Left ventricle myocardium inferior (tissue), 1 donor: ENCODE measurements at regions of chr3 and their contacts with region 1.

Region 1: DNA sequence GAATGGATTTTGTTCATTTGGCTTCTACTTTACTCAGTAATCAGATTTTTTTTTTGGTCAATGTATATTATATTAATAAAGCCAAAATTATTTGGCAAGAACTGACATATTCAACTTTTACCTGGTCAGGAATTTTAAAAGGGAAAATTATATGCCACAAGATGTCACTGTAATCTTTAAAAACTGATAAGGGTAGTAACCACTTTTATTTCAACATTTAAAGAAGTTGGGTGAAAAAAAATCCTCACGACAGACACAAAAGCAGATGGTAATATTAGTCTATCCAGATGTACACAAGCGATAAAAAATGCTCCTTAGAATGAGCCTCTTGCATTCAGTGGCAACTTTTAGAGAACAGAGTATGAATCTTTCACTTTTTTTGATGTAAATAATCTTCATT is 101.9 kb downstream of the SERPINI1 start:
- DNase-seq: no peak
- H3K4me3 ChIP-seq: peak overlapping the region; percentile 27
- H3K27ac ChIP-seq: peak overlapping the region; percentile 14
- H3K4me1 ChIP-seq: peaks cover 12% of the 10 kb centered on the region
- H3K27me3 ChIP-seq: no peaks in the 10 kb centered on the region
- CTCF ChIP-seq: peak; percentile 57

Region 2: GRCh38 chr3:167882067-167882667 is 44.7 kb after region 1 on chr3:
- intact Hi-C with region 1: loop called (anchors 2 kb)
- DNase-seq: no peak
- H3K4me3 ChIP-seq: peak overlapping the region; percentile 37
- H3K27ac ChIP-seq: peak overlapping the region; percentile 39
- H3K4me1 ChIP-seq: peaks cover 16% of the 10 kb centered on the region
- H3K27me3 ChIP-seq: no peaks in the 10 kb centered on the region
- CTCF ChIP-seq: peak; percentile 80

Region 3: DNA sequence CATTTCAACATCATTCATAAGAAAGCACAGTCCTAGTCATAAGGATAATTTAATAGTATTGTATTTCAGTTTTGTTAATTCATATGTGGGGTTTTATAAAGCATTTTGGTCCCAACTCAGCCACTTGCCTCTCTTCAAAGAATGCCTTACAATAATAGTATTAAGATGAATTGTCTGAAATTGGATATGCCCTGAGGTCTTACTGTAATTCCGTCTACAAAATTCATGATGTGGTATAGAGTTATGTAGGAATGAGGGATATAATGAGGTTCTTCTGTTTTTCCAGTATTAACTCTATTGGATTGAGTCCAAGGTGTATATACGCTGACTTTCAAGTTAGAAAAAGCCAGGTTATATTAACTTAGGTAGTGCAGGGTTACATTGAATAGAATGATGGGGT is 81.2 kb after region 1 on chr3:
- intact Hi-C with region 1: no loop called
- DNase-seq: no peak
- H3K4me3 ChIP-seq: no peak overlapping the region
- H3K27ac ChIP-seq: no peak overlapping the region
- H3K4me1 ChIP-seq: no peaks in the 10 kb centered on the region
- H3K27me3 ChIP-seq: no peaks in the 10 kb centered on the region
- CTCF ChIP-seq: no peak

Region 4: DNA sequence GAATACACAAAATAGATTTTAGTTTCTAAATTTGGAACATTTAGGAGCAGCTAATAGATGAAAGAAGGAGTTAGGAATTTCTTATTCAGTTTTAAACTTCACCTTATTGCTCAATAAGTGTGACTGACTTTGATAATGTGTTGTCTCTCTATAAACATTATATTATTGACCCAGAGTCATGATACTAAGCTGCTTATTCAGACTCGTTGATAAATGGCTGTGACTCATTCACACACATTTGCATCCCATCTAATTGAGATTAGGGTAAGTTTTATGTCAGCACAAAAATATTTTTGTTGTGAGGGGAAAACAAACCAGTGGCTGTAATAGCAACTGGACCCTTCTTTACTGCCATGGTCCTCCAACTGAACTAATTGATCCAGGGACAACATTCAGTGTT is 120.7 kb after region 1 on chr3:
- intact Hi-C with region 1: no loop called
- DNase-seq: no peak
- H3K4me3 ChIP-seq: no peak overlapping the region
- H3K27ac ChIP-seq: no peak overlapping the region
- H3K4me1 ChIP-seq: no peaks in the 10 kb centered on the region
- H3K27me3 ChIP-seq: no peaks in the 10 kb centered on the region
- CTCF ChIP-seq: no peak